Natural killer cell (primary cell): ENCODE measurements at regions of chr2 and their contacts with region 1.

Region 1: GRCh38 chr2:120680136-120680761 is 55.4 kb upstream of the GLI2 start:
- DNase-seq: peak; percentile 57 to 85
- ATAC-seq: peak; percentile 67 to 84 (median 69)
- H3K4me3 ChIP-seq: no peak overlapping the region
- H3K4me3 Mint-ChIP-seq: peak overlapping the region; percentile 26
- H3K27ac ChIP-seq: no peak overlapping the region
- H3K27ac Mint-ChIP-seq: peak overlapping the region in 1 of 2 donors; percentile 67
- H3K4me1 ChIP-seq: peaks cover 5% of the 10 kb centered on the region
- H3K4me1 Mint-ChIP-seq: no peaks in the 10 kb centered on the region
- H3K27me3 ChIP-seq: no peaks in the 10 kb centered on the region
- H3K27me3 Mint-ChIP-seq: peaks cover 11 to 12% of the 10 kb centered on the region in 2 donors
- CTCF ChIP-seq: peak; percentile 18

Region 2: DNA sequence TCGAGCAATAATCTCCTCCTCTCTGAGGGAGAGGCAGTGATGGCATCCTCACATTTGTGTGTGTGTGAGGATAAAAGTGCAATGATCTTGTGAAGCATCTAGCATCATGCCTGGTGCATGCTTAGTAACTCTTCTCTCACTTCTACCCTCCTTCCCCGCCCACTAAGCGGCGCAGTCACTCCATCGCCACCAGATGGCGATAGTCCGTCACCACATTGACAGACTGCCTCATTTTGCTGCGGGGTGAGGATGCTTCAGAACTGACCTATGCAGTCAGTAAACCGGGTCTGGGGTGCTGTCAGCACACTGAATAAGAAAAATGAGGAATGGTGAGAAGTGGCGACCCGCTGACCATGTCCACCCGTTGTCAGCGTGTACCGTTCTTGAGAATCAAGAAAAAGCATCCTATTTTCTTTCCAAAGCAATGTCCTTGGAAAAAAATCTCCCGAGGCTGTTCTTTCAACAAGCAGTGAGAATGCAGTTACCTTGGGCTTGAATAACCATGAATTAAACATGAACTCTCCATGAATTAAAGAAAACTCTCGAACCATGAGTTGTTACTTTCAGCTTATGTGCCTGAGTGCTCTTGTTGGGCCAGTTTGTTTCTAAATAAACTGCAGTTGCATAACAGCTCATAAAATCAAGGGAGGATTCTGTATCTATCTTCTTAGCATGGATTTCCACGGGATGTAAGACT is 1038.5 kb before region 1 on chr2:
- intact Hi-C with region 1: loop called (anchors 2 kb)
- DNase-seq: peak; percentile 48 to 86
- ATAC-seq: peak; percentile 87 to 99 (median 94)
- H3K4me3 ChIP-seq: no peak overlapping the region
- H3K4me3 Mint-ChIP-seq: no peak overlapping the region
- H3K27ac ChIP-seq: no peak overlapping the region
- H3K27ac Mint-ChIP-seq: no peak overlapping the region
- H3K4me1 ChIP-seq: no peaks in the 10 kb centered on the region
- H3K4me1 Mint-ChIP-seq: no peaks in the 10 kb centered on the region
- H3K27me3 ChIP-seq: no peaks in the 10 kb centered on the region
- H3K27me3 Mint-ChIP-seq: peaks cover 18 to 28% of the 10 kb centered on the region in 2 donors
- CTCF ChIP-seq: peak; percentile 94

Region 3: DNA sequence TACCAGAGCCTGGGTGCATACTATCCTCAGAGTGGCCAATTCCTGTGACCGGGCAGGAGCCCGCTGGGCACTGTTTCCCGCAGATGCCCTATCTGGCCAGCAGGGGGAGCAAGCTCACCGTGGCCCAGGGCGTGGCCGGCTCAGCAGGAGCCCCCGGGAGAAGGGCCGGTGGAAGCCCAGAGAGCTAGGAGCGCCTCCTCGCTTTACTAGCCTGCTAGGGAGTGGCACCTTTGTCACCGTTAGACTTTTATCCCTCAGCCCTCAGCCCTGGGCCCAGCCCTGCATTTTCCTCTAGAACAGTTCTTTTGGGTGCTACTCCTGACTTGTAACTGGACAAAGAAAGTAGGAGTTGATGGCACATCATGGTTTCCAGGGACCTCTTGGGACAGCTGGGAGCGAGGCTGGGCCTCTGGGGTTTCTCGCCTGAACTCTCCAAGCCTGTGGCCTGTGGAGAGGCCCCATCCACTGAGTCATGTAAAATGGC is 977.3 kb before region 1 on chr2:
- intact Hi-C with region 1: loop called (anchors 10 kb)
- DNase-seq: peak; percentile 58 to 83
- ATAC-seq: peak; percentile 90 to 98 (median 95)
- H3K4me3 ChIP-seq: no peak overlapping the region
- H3K4me3 Mint-ChIP-seq: no peak overlapping the region
- H3K27ac ChIP-seq: no peak overlapping the region
- H3K27ac Mint-ChIP-seq: no peak overlapping the region
- H3K4me1 ChIP-seq: peaks cover 9% of the 10 kb centered on the region
- H3K4me1 Mint-ChIP-seq: peaks cover 0 to 6% of the 10 kb centered on the region in 2 donors
- H3K27me3 ChIP-seq: no peaks in the 10 kb centered on the region
- H3K27me3 Mint-ChIP-seq: peaks cover 6 to 12% of the 10 kb centered on the region in 2 donors
- CTCF ChIP-seq: peak; percentile 95

Region 4: DNA sequence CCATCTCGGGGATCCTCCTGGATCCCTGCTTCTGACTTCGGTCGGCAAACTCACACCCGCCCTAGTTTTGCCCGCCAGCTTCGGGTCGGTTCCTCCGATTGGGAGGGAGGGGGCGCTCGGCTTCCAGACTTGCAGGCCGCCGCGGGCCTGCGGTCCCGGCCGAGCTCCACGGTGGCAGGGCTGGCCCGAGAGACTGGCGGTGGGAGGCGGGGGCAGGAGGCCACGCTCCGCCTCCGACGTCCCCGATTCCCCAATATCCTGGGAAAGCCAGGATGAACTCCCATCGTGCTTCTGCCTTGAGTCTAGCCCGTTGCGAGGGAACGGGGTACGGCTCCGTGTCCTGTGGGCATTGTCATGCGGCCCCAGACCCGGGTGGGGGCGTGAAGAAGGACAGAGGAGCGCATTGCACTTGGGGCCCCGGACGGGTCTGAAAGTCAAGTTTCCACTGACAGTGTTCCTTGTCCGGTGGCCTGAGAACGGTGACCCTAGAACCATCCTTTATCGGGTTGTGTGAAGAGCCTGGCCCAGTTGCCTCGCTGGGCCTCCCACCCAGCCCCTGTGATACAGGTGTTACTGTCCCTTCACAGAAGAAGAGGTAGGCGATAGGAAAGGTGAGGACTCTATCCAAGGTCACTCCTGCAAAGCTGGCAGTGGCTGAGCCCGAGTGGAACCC is 336.7 kb before region 1 on chr2:
- intact Hi-C with region 1: loop called (anchors 10 kb)
- DNase-seq: peak in 1 of 2 donors; percentile 69
- ATAC-seq: peak; percentile 43 to 72 (median 54)
- H3K4me3 ChIP-seq: no peak overlapping the region
- H3K4me3 Mint-ChIP-seq: peak overlapping the region; percentile 78
- H3K27ac ChIP-seq: no peak overlapping the region
- H3K27ac Mint-ChIP-seq: no peak overlapping the region
- H3K4me1 ChIP-seq: peaks cover 30% of the 10 kb centered on the region
- H3K4me1 Mint-ChIP-seq: peaks cover 7 to 18% of the 10 kb centered on the region in 2 donors
- H3K27me3 ChIP-seq: peaks cover 33% of the 10 kb centered on the region
- H3K27me3 Mint-ChIP-seq: peaks cover 37 to 44% of the 10 kb centered on the region in 2 donors
- CTCF ChIP-seq: peak; percentile 30

Region 5: DNA sequence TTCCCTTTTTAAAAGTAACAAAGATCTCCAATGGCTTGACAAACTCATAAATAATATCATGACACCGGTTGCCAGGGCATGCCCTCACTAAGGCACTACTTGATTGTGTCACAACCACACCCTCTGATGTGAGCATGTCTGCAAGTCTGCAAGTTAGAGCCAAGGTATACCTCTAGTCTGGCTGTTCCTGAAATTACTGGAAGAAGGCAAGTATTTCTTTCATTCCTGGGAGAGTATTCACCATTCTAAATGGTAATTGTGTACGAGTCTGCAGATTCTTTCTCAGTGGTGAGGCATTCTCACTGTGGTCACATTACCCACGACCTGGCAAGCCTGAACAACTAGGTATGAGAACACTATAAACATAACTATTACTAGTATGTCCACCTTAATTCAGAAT is 824.8 kb after region 1 on chr2:
- intact Hi-C with region 1: no loop called
- DNase-seq: no peak
- ATAC-seq: peak in 2 of 3 donors; percentile 58 to 69
- H3K4me3 ChIP-seq: no peak overlapping the region
- H3K4me3 Mint-ChIP-seq: peak overlapping the region; percentile 56
- H3K27ac ChIP-seq: no peak overlapping the region
- H3K27ac Mint-ChIP-seq: peak overlapping the region; percentile 66 to 73
- H3K4me1 ChIP-seq: peaks cover 24% of the 10 kb centered on the region
- H3K4me1 Mint-ChIP-seq: peaks cover 67 to 69% of the 10 kb centered on the region in 2 donors
- H3K27me3 ChIP-seq: no peaks in the 10 kb centered on the region
- H3K27me3 Mint-ChIP-seq: no peaks in the 10 kb centered on the region
- CTCF ChIP-seq: no peak